A549 (cell line): ENCODE measurements at regions of chr1 and their contacts with region 1.

Region 1: DNA sequence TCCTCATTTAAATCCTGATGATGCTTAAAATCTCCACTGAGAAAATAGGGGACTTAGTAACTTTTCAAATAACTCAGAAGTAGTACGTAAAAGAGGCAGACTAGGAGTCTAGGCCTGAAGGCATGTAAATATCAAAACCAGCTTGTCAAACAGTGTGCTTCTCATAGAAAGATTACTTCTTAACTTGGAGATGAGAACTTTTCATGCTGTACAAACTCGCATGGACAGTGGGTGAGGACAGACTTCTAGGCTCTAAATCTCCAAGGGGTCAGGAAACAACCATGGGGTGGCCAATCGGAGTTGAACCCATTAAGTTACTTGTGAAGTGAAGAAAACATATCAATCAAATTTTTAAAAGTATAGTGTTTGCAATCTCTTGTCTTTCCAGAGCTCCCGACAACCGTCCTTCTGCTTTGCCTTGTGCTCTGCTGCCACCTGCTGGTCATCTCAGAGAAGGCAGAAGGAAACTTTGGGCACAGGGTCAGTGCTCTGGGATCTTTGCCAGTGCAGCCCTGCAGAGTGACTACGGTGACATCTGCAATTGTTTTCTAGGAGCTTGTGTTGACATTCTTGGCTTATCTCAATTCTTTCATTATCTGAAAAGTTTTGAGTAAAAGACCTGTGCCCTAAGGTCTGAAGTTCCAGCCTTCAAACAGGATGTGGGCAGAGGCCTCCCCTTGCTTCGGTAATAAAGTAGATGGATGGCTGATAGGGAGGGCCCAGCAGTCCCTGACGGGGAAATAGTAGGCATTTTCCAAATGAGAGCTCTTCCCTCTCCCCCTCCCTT is 105.1 kb upstream of the PDE4B start:
- DNase-seq: peak; percentile 40 to 53
- ATAC-seq: peak; percentile 87 to 92
- H3K4me3 ChIP-seq: no peak overlapping the region
- H3K27ac ChIP-seq: no peak overlapping the region
- H3K4me1 ChIP-seq: 0 out of 3 replicates have a peak, but pooled peaks cover 3% of the 10 kb centered on the region
- CTCF ChIP-seq: peak; percentile 86
- EP300 ChIP-seq: no peak
- POLR2A ChIP-seq: no peak
- RAD21 ChIP-seq: peak; percentile 93 to 97

Region 2: DNA sequence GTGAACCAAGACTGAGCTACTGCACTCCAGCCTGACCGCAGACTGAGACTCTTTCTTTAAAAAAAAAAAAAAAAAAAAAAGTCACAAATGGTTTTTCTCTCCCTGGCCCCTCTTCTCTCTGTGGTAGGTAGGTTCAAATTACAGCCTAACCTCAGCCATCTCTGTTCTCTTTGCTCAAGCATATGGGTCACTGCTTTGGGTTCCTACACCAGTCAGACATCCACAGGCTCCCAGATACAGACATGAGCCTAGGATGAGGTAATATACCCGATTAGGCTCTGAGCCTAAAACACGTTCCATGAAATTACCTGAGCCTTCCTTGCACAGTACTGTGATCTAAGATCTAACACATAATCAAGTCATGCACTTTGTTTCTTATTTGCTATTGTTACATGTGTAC is 630.8 kb before region 1 on chr1:
- CTCF ChIA-PET with region 1: interaction called, 10 read pairs
- POLR2A ChIA-PET with region 1: no interaction called
- DNase-seq: no peak
- ATAC-seq: no peak
- H3K4me3 ChIP-seq: no peak overlapping the region
- H3K27ac ChIP-seq: no peak overlapping the region
- H3K4me1 ChIP-seq: peaks cover 3% of the 10 kb centered on the region; the same call in 1 of the 3 replicates
- CTCF ChIP-seq: no peak
- EP300 ChIP-seq: no peak
- POLR2A ChIP-seq: no peak
- RAD21 ChIP-seq: no peak

Region 3: DNA sequence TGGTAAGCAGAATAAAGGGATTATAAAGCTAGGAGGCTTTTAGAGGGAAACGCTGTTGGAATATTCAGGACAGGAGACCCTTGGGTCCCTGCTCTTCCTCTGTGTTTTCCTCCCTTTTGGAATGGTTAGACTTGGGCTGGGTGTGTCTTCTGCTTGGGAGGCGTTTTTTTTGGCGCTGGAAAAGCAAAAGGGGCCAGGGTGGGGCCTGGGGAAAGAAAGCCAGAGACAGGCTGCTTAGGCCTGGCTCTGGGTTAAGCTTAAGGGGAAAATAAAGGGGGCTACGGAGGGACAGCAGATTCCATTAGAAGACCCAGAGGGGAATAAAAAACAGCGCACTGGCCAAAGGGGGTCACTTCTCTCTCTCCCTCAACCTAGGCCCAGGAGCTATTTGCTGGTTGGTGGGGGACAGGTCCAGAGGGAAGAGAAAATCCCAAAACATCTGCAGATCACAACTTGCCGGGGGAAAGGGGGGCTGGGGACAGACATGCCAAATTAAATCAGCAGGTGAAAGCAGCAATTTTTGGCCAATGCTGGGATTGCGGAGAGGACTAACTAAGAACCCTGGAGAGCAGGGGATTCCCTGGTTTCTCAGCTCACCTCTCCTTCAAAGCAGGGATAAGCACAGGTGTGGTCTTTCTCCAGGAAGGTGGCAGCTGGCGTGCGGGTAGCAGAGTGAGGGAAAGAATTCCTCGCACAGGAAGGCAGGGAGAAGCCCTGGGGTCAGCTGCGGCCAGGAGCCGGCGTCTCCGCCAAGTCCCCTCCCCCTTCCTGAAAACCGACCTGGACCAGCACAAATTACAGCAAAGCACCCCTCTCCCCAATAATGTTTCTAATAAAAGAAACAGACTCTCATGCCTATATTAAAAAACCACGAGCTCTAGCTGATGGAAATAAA is 621.9 kb before region 1 on chr1:
- CTCF ChIA-PET with region 1: interaction called, 18 read pairs
- POLR2A ChIA-PET with region 1: no interaction called
- DNase-seq: peak in 1 of 2 experiments; percentile 12
- ATAC-seq: peak in 1 of 2 experiments; percentile 5; a peak in 3 of 6 replicates
- H3K4me3 ChIP-seq: peak overlapping the region; percentile 81
- H3K27ac ChIP-seq: peak overlapping the region; percentile 73 to 99
- H3K4me1 ChIP-seq: peaks cover 13% of the 10 kb centered on the region; the same call in 2 of the 3 replicates
- CTCF ChIP-seq: no peak
- EP300 ChIP-seq: no peak
- POLR2A ChIP-seq: no peak
- RAD21 ChIP-seq: no peak

Region 4: GRCh38 chr1:65209005-65209885 is 478.4 kb before region 1 on chr1:
- CTCF ChIA-PET with region 1: interaction called, 33 read pairs
- POLR2A ChIA-PET with region 1: no interaction called
- DNase-seq: peak; percentile 28 to 62
- ATAC-seq: peak; percentile 82 to 83
- H3K4me3 ChIP-seq: no peak overlapping the region
- H3K27ac ChIP-seq: no peak overlapping the region
- H3K4me1 ChIP-seq: no peaks in the 10 kb centered on the region
- CTCF ChIP-seq: peak; percentile 54
- EP300 ChIP-seq: no peak
- POLR2A ChIP-seq: no peak
- RAD21 ChIP-seq: peak; percentile 60 to 62

Region 5: GRCh38 chr1:65235867-65236805 is 451.5 kb before region 1 on chr1:
- CTCF ChIA-PET with region 1: interaction called, 20 read pairs
- POLR2A ChIA-PET with region 1: no interaction called
- DNase-seq: peak in 1 of 2 experiments; percentile 37
- ATAC-seq: no peak
- H3K4me3 ChIP-seq: no peak overlapping the region
- H3K27ac ChIP-seq: no peak overlapping the region
- H3K4me1 ChIP-seq: no peaks in the 10 kb centered on the region
- CTCF ChIP-seq: peak; percentile 38; the same call in 2 of the 3 replicates
- EP300 ChIP-seq: no peak
- POLR2A ChIP-seq: no peak
- RAD21 ChIP-seq: peak; percentile 40 to 70; a peak in 3 of 5 replicates

Region 6: GRCh38 chr1:65431111-65431705 is 256.4 kb before region 1 on chr1:
- CTCF ChIA-PET with region 1: interaction called, 13 read pairs
- POLR2A ChIA-PET with region 1: no interaction called
- DNase-seq: peak in 1 of 2 experiments; percentile 38
- ATAC-seq: peak in 1 of 2 experiments; percentile 50; a peak in 2 of 6 replicates
- H3K4me3 ChIP-seq: no peak overlapping the region
- H3K27ac ChIP-seq: peak overlapping the region; percentile 64 to 71; a peak in 2 of 6 replicates
- H3K4me1 ChIP-seq: peaks cover 30% of the 10 kb centered on the region
- CTCF ChIP-seq: peak; percentile 56
- EP300 ChIP-seq: no peak
- POLR2A ChIP-seq: no peak
- RAD21 ChIP-seq: peak; percentile 47 to 49

Region 7: GRCh38 chr1:65698590-65698989 is 11.0 kb after region 1 on chr1:
- CTCF ChIA-PET with region 1: interaction called, 22 read pairs
- POLR2A ChIA-PET with region 1: no interaction called
- DNase-seq: no peak
- ATAC-seq: no peak
- H3K4me3 ChIP-seq: no peak overlapping the region
- H3K27ac ChIP-seq: no peak overlapping the region
- H3K4me1 ChIP-seq: no peaks in the 10 kb centered on the region
- CTCF ChIP-seq: no peak
- EP300 ChIP-seq: no peak
- POLR2A ChIP-seq: no peak
- RAD21 ChIP-seq: no peak